CD8-positive, alpha-beta T cell (primary cell): ENCODE measurements at regions of chr17 and their contacts with region 1.

Region 1: DNA sequence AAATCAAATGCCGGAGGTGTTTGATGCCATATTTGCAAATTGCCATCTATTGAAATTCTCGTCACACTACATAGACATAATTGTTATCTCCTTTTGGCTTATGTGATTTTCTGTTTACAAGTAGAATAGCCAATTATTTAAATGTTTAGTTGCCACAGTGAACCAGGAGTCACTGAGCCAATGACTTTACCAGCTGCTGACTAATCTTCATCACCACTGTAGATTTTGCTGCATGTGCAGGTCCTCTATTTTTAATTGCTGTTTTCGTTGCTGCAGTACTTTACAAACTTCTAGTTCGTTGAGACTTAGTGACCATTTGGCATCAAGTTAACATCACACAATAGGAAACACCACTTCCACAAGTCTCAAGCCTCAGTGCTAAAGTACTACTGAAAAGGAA is 22.8 kb downstream of the ABHD15 start:
- DNase-seq: no peak
- ATAC-seq: no peak
- H3K4me3 ChIP-seq: no peak overlapping the region
- H3K4me3 Mint-ChIP-seq: no peak overlapping the region
- H3K27ac ChIP-seq: no peak overlapping the region
- H3K27ac Mint-ChIP-seq: no peak overlapping the region
- H3K4me1 ChIP-seq: no peaks in the 10 kb centered on the region
- H3K4me1 Mint-ChIP-seq: peaks cover 4% of the 10 kb centered on the region
- H3K27me3 ChIP-seq: no peaks in the 10 kb centered on the region
- H3K27me3 Mint-ChIP-seq: no peaks in the 10 kb centered on the region
- CTCF ChIP-seq: no peak

Region 2: GRCh38 chr17:29524460-29525091 is 19.5 kb before region 1 on chr17:
- CTCF ChIA-PET with region 1: no interaction called
- POLR2A ChIA-PET with region 1: no interaction called
- intact Hi-C with region 1: loop called in 1 of 2 experiments (anchors 2 kb)
- DNase-seq: no peak
- ATAC-seq: no peak
- H3K4me3 ChIP-seq: no peak overlapping the region
- H3K4me3 Mint-ChIP-seq: no peak overlapping the region
- H3K27ac ChIP-seq: no peak overlapping the region
- H3K27ac Mint-ChIP-seq: no peak overlapping the region
- H3K4me1 ChIP-seq: no peaks in the 10 kb centered on the region
- H3K4me1 Mint-ChIP-seq: no peaks in the 10 kb centered on the region
- H3K27me3 ChIP-seq: no peaks in the 10 kb centered on the region
- H3K27me3 Mint-ChIP-seq: no peaks in the 10 kb centered on the region
- CTCF ChIP-seq: no peak